HEK293 (cell line): ENCODE measurements at regions of chr19 and their contacts with region 1.

Region 1: DNA sequence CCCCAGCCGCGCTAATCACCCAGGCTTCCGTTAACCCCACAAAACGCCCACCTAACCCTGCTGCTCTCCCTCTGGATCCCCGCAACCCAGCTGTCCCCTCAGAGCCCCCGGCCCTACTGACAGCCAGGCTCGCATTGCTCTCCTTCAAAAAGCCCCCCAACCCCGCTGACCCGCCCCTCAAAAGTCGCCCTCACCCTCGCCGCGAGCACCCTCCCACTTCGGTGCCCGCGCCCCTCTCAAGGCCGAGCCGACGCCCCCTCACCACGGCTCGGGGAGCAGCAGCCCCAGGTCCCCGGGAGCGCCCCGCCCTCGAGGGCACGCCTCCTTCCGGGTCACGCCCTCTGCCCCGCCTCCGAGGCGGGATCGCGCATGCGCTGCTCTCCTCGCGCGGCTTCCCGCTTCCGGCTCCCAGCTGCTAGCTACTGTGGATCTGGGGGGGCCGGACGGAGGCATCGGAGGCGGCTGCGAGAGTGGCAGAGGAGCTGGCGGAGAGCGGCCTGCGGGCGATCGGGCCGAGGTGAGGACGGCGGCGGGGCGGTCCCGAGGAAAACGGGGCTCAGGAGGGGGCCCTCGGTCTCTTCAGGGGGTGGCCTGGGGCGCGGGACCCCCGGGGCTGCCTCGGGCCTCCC is 46.1 kb downstream of the ARHGEF18 start:
- H3K4me3 ChIP-seq: peak overlapping the region; percentile 99
- H3K27ac ChIP-seq: peak overlapping the region; percentile 32; the same call in 1 of the 2 replicates
- H3K4me1 ChIP-seq: peaks cover 13% of the 10 kb centered on the region
- CTCF ChIP-seq: no peak; the same call in 1 of the 2 replicates

Region 2: GRCh38 chr19:7219056-7219455 is 175.8 kb before region 1 on chr19:
- CTCF ChIA-PET with region 1: no interaction called
- POLR2A ChIA-PET with region 1: interaction called, 10 read pairs
- H3K4me3 ChIP-seq: no peak overlapping the region
- H3K27ac ChIP-seq: no peak overlapping the region
- H3K4me1 ChIP-seq: no peaks in the 10 kb centered on the region
- CTCF ChIP-seq: no peak

Region 3: GRCh38 chr19:7382694-7383093 is 12.2 kb before region 1 on chr19:
- CTCF ChIA-PET with region 1: interaction called, 12 read pairs
- POLR2A ChIA-PET with region 1: interaction called, 3 read pairs
- H3K4me3 ChIP-seq: no peak overlapping the region
- H3K27ac ChIP-seq: no peak overlapping the region
- H3K4me1 ChIP-seq: no peaks in the 10 kb centered on the region
- CTCF ChIP-seq: peak; percentile 62; the same call in 1 of the 2 replicates

Region 4: GRCh38 chr19:7471696-7472615 is 77.1 kb after region 1 on chr19:
- CTCF ChIA-PET with region 1: no interaction called
- POLR2A ChIA-PET with region 1: no interaction called
- H3K4me3 ChIP-seq: no peak overlapping the region
- H3K27ac ChIP-seq: no peak overlapping the region
- H3K4me1 ChIP-seq: no peaks in the 10 kb centered on the region
- CTCF ChIP-seq: no peak